Psoas muscle (tissue), 8 donors: ENCODE measurements at regions of chr19 and their contacts with region 1.

Region 1: GRCh38 chr19:48391107-48391986 is at the start of gene KDELR1:
- DNase-seq: peak; percentile 70 to 87
- ATAC-seq: peak; percentile 91 to 97 (median 95)
- H3K4me3 ChIP-seq: peak within 1 kb of the TSS; percentile 99
- H3K27ac ChIP-seq: peak within 1 kb of the TSS; percentile 87
- H3K4me1 ChIP-seq: no peaks in the 10 kb centered on the region
- H3K27me3 ChIP-seq: peaks cover 0 to 36% (median 27%) of the 10 kb centered on the region in 3 donors
- CTCF ChIP-seq: peak; percentile 86
- total RNA-seq, gene KDELR1: 56.5 to 71.0 (median 62.9) TPM

Region 2: GRCh38 chr19:48321622-48322591 is 69.4 kb before region 1 on chr19:
- intact Hi-C with region 1: loop called (anchors 1 to 5 kb)
- DNase-seq: peak; percentile 98 to 99
- ATAC-seq: peak; percentile 91 to 94 (median 92)
- H3K4me3 ChIP-seq: peak overlapping the region; percentile 70
- H3K27ac ChIP-seq: peak overlapping the region; percentile 93
- H3K4me1 ChIP-seq: peaks cover 14% of the 10 kb centered on the region
- H3K27me3 ChIP-seq: no peaks in the 10 kb centered on the region
- CTCF ChIP-seq: no peak

Region 3: DNA sequence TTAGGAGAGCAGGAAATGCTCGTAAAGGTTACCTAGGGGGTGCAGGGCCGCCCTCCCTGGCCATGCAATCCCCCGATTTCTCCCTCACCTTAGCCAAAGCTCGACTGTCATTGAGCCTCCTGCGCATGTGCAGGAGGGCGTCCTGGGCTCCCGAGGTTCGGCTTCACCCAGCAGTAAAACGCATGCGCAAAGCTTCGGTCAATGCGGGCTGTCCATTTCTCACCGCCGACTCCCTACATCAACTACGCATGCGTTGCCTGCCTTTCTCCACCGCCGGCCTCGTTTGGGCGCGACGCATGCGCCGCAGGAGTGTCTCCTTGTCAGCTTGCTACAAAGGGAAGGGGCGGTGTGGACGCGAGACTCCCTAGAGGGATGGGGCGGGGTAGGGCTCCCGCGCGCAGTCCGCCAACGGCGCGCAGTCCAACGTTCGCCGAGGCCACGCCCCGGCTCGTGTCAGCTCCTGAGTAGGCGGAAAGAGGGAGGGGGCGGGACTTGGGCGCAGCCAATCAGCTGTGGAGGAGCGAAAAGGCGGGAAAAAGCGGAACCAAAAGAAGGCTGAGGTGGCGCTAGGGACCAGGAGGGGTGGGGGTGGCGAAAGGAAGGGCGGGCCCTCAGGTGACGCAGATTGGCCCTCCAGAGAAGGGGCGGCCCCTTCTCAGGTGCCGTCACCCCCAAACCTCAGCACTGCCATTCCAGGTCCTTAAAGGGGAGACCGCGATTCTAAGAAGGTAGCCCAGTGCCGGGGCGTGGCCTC is 27.4 kb before region 1 on chr19 and contains the starts of genes SYNGR4 and TMEM143:
- intact Hi-C with region 1: loop called in 1 of 2 experiments (anchors 2 kb)
- DNase-seq: peak; percentile 99 to 100
- ATAC-seq: peak; percentile 89 to 94 (median 93)
- H3K4me3 ChIP-seq: peak within 1 kb of the TSS; percentile 80
- H3K27ac ChIP-seq: peak within 1 kb of the TSS; percentile 92
- H3K4me1 ChIP-seq: peaks cover 4% of the 10 kb centered on the region
- H3K27me3 ChIP-seq: no peaks in the 10 kb centered on the region
- CTCF ChIP-seq: no peak
- total RNA-seq, gene SYNGR4: not detected
- total RNA-seq, gene TMEM143: 52.0 to 65.1 (median 57.7) TPM

Region 4: DNA sequence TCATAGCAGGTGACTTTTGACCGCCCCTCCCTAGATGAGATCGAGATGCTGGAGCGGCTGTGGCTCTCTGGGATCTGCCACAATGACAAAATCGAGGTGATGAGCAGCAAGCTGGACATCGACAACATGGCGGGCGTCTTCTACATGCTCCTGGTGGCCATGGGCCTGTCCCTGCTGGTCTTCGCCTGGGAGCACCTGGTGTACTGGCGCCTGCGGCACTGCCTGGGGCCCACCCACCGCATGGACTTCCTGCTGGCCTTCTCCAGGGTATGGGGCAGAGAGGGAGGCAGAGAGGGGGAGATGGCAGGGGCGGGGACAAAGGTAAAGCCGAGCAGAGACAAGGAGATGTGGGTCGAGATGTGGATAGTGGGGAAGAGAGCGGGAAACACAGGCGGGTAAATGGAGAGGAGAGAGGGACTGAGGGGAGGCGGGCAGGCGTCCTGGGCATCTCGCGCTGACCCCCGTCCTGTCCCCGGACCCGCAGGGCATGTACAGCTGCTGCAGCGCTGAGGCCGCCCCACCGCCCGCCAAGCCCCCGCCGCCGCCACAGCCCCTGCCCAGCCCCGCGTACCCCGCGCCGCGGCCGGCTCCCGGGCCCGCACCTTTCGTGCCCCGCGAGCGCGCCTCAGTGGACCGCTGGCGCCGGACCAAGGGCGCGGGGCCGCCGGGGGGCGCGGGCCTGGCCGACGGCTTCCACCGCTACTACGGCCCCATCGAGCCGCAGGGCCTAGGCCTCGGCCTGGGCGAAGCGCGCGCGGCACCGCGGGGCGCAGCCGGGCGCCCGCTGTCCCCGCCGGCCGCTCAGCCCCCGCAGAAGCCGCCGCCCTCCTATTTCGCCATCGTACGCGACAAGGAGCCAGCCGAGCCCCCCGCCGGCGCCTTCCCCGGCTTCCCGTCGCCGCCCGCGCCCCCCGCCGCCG is 51.0 kb after region 1 on chr19:
- intact Hi-C with region 1: loop called in 1 of 2 experiments (anchors 1 kb)
- DNase-seq: no peak
- ATAC-seq: no peak
- H3K4me3 ChIP-seq: no peak overlapping the region
- H3K27ac ChIP-seq: no peak overlapping the region
- H3K4me1 ChIP-seq: peaks cover 15% of the 10 kb centered on the region
- H3K27me3 ChIP-seq: peaks cover 0 to 40% (median 17%) of the 10 kb centered on the region in 3 donors
- CTCF ChIP-seq: no peak